ENCODE measurements at regions of chr1 and their contacts with region 1.

Region 1: GRCh38 chr1:100400404-100400803 is 48.1 kb downstream of the CDC14A start:
- DNase-seq: peak; percentile 39 to 82 (median 78)
- H3K4me3 ChIP-seq: peak overlapping the region; percentile 21
- H3K4me3 Mint-ChIP-seq: peak overlapping the region; percentile 67 to 86 (median 77)
- H3K27ac ChIP-seq: peak overlapping the region; percentile 13
- H3K27ac Mint-ChIP-seq: peak overlapping the region; percentile 77 to 98 (median 87)
- H3K4me1 ChIP-seq: peaks cover 98% of the 10 kb centered on the region
- H3K4me1 Mint-ChIP-seq: peaks cover 85 to 94% (median 94%) of the 10 kb centered on the region in 3 donors
- H3K27me3 ChIP-seq: no peaks in the 10 kb centered on the region
- H3K27me3 Mint-ChIP-seq: no peaks in the 10 kb centered on the region

Region 2: DNA sequence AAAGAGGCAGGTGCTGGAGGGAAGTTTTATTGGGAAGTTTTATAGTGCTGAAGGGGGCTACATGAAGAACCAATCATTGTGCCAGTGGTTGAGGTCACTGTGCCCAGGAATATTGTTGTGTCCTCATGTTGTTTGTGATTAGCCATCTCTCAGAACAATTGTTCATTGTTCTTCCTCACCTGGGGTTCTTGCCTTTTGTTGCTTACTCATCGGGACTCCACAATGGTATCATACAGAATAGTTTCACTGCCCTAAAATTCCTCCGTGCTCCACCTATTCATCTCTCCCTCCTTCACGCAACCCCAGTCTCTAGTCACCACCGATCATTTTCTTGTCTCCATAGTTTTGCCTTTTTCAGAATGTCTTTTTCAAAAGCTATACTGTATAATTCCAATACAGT is 87.0 kb before region 1 on chr1:
- CTCF ChIA-PET with region 1: no interaction called
- POLR2A ChIA-PET with region 1: no interaction called
- DNase-seq: no peak
- H3K4me3 ChIP-seq: no peak overlapping the region
- H3K4me3 Mint-ChIP-seq: no peak overlapping the region
- H3K27ac ChIP-seq: no peak overlapping the region
- H3K27ac Mint-ChIP-seq: peak overlapping the region in 1 of 8 donors; percentile 43
- H3K4me1 ChIP-seq: no peaks in the 10 kb centered on the region
- H3K4me1 Mint-ChIP-seq: no peaks in the 10 kb centered on the region
- H3K27me3 ChIP-seq: no peaks in the 10 kb centered on the region
- H3K27me3 Mint-ChIP-seq: no peaks in the 10 kb centered on the region

Region 3: DNA sequence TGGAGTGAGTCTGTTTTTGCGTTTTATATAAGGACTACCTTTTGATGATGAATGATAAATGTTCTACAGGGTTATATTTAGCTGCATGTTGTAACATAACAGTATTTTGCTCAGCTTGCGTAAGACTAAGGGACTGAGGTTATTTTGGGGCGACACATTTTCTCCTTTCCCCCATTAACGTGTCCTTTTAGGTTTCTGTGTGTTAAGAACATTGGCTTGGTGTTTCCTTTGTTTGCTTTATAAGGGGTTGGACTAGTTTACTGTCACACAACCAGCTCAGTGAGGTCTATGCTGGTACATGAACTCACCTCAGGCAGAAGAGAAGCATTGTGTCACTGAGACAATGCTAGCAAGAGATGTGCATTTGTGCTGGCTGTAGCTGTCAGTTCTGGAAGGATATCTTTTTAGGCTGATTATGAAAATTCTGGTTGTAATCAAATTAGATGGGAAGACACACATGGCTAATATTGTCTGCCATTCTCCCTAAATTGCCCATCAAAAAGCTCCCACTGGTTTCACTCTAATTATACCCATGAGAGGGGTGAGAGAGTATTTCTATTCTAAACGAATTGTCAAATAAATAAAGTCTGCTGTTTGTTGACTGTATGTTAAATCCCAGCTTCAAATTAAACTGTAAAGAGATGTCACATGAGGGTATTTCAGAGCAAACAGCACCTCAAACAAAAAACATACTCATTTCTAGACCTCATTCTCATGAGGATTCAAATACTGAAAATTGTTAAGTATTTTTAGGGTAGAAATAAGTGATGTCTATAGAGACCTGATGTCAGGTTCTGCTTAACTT is 14.5 kb after region 1 on chr1:
- CTCF ChIA-PET with region 1: interaction called, 3 read pairs
- POLR2A ChIA-PET with region 1: interaction called, 10 read pairs
- DNase-seq: peak in 1 of 5 donors; percentile 59
- H3K4me3 ChIP-seq: peak overlapping the region; percentile 5
- H3K4me3 Mint-ChIP-seq: peak overlapping the region; percentile 13 to 63 (median 51)
- H3K27ac ChIP-seq: peak overlapping the region; percentile 25
- H3K27ac Mint-ChIP-seq: peak overlapping the region; percentile 41 to 92 (median 87)
- H3K4me1 ChIP-seq: peaks cover 78% of the 10 kb centered on the region
- H3K4me1 Mint-ChIP-seq: peaks cover 79 to 91% (median 88%) of the 10 kb centered on the region in 3 donors
- H3K27me3 ChIP-seq: no peaks in the 10 kb centered on the region
- H3K27me3 Mint-ChIP-seq: no peaks in the 10 kb centered on the region